ENCODE measurements at regions of chr7 and their contacts with region 1.

Region 1: GRCh38 chr7:111407258-111407657 is 155.0 kb downstream of the IMMP2L start:
- DNase-seq: no peak
- ATAC-seq: no peak
- H3K4me3 Mint-ChIP-seq: no peak overlapping the region
- H3K27ac Mint-ChIP-seq: no peak overlapping the region
- H3K4me1 Mint-ChIP-seq: no peaks in the 10 kb centered on the region
- H3K27me3 Mint-ChIP-seq: no peaks in the 10 kb centered on the region

Region 2: GRCh38 chr7:111393011-111393754 is 14.1 kb before region 1 on chr7:
- CTCF ChIA-PET with region 1: no interaction called
- POLR2A ChIA-PET with region 1: no interaction called
- intact Hi-C with region 1: no loop called
- DNase-seq: no peak
- ATAC-seq: no peak
- H3K4me3 Mint-ChIP-seq: no peak overlapping the region
- H3K27ac Mint-ChIP-seq: no peak overlapping the region
- H3K4me1 Mint-ChIP-seq: no peaks in the 10 kb centered on the region
- H3K27me3 Mint-ChIP-seq: no peaks in the 10 kb centered on the region

Region 3: DNA sequence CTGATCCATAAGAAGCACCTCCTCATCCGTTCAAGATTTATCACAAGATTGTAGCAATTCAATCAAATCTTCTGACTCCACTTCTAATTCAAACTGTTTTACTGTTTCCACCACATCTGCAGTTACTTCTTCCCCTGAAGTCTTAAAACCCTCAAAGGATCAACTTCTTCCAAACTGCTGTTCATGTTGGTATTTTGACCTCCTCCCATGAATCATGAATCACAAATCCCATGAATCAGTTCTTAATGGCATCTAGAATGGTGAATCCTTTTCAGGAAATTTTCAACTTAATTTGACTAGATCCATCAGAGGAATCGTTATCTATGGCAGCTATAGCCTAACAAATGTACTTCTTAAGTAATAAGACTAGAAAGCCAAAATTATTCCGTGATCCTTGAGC is 32.7 kb after region 1 on chr7:
- CTCF ChIA-PET with region 1: no interaction called
- POLR2A ChIA-PET with region 1: no interaction called
- intact Hi-C with region 1: loop called (anchors 1 kb)
- DNase-seq: no peak
- ATAC-seq: no peak
- H3K4me3 Mint-ChIP-seq: no peak overlapping the region
- H3K27ac Mint-ChIP-seq: no peak overlapping the region
- H3K4me1 Mint-ChIP-seq: no peaks in the 10 kb centered on the region
- H3K27me3 Mint-ChIP-seq: no peaks in the 10 kb centered on the region

Measured in activated CD4-positive, alpha-beta T cell treated with anti-CD3 and anti-CD28 coated beads for 36 hours (primary cell).